ENCODE measurements at regions of chr4 and their contacts with region 1.

Region 1: DNA sequence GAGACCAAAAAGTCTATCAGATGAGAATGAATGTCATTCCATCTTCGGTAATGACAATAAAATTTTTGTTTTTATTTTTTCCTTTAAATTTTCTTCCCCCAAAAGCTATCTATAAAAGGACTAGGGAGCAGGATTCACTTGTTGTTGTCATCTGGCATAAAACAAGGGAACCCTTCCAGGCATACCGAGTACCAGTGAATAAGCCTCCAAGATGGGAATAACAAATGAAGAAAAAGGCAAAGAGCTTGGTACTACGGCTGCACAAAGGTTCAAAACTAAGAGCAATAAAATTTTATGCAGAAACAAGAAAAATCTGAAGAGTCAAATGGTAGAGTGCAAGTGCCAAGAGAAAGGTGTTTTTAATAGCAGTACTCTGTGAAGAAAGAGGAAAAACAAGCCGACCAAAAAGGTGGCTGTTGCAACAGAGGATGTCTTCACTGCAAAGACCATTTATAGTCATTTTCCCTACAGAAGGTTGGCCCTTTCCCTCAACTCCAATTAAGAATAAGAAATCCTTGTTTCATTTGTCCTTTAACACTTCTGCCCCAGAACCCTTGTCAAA is 25.8 kb downstream of the PPP3CA start:
- DNase-seq: no peak
- ATAC-seq: peak in 2 of 3 donors; percentile 24 to 46
- H3K4me3 ChIP-seq: no peak overlapping the region
- H3K4me3 Mint-ChIP-seq: no peak overlapping the region
- H3K27ac ChIP-seq: no peak overlapping the region
- H3K27ac Mint-ChIP-seq: peak overlapping the region; percentile 5 to 75
- H3K4me1 ChIP-seq: peaks cover 8% of the 10 kb centered on the region
- H3K4me1 Mint-ChIP-seq: peaks cover 59 to 77% of the 10 kb centered on the region in 2 donors
- H3K27me3 ChIP-seq: no peaks in the 10 kb centered on the region
- H3K27me3 Mint-ChIP-seq: no peaks in the 10 kb centered on the region
- CTCF ChIP-seq: no peak

Region 2: DNA sequence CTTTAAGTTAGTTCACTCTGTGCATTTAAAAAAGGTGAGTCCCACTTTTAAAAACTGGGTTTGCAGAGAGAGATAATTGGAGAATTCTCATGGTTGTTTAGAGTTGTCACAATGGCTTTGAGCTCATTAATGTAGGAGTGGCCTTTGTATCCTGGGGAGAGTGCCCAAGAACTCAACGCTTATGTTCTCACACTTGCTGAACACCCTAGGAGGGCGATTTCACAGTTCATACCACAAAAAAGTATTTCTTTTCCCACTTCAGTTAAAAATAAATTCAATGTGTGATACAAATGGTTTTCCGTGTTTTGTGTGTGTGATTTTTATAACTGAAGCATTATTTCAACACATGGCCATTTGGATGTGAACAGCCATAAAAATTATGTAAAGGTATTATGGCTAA is 812.2 kb before region 1 on chr4:
- intact Hi-C with region 1: loop called (anchors 5 kb)
- DNase-seq: peak in 1 of 2 donors; percentile 2
- ATAC-seq: peak; percentile 77 to 97 (median 81)
- H3K4me3 ChIP-seq: no peak overlapping the region
- H3K4me3 Mint-ChIP-seq: peak overlapping the region; percentile 58
- H3K27ac ChIP-seq: no peak overlapping the region
- H3K27ac Mint-ChIP-seq: peak overlapping the region in 1 of 2 donors; percentile 22
- H3K4me1 ChIP-seq: no peaks in the 10 kb centered on the region
- H3K4me1 Mint-ChIP-seq: peaks cover 12 to 38% of the 10 kb centered on the region in 2 donors
- H3K27me3 ChIP-seq: no peaks in the 10 kb centered on the region
- H3K27me3 Mint-ChIP-seq: peaks cover 2 to 3% of the 10 kb centered on the region in 2 donors
- CTCF ChIP-seq: no peak